Caco-2 (cell line): ENCODE measurements at regions of chr3 and their contacts with region 1.

Region 1: DNA sequence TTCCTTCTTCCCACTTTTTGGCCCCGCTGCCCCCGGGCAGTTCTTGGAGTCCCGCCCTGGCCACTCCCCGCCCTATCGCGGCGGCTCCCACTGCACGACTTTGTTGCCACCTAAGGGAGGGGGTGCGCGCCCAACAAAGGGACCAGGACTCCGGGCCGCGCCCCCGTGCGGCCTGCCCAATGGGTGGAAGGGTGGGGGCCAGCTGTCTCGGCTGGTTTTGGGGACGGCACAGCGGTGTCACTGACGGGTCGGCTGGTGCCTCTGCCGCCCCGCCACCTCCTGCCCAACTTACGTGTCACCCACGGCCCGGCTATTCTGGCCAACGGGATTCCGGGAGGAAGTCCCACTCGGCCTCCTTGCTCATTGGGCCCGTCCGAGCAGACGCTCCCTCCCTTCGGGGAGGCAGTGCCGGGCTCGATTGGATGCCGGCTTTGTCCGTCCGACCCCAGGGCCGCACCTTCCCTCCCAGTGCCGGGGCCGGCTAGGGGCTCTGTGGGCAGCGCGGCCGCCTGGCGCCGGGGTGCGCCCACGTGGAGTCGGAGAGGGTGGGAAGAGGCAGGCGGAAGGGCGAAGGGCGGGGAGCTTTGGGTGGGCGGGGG is at the start of gene GOLIM4:
- DNase-seq: peak; percentile 95 to 96
- H3K4me3 ChIP-seq: peak within 1 kb of the TSS; percentile 86
- H3K4me3 Mint-ChIP-seq: peak within 1 kb of the TSS; percentile 88
- H3K27ac Mint-ChIP-seq: peak within 1 kb of the TSS; percentile 70
- H3K4me1 ChIP-seq: peaks cover 26% of the 10 kb centered on the region
- H3K4me1 Mint-ChIP-seq: peaks cover 12% of the 10 kb centered on the region
- H3K27me3 ChIP-seq: no peaks in the 10 kb centered on the region
- H3K27me3 Mint-ChIP-seq: no peaks in the 10 kb centered on the region
- CTCF ChIP-seq: peak in 1 of 2 experiments; percentile 17
- total RNA-seq, gene GOLIM4: 17.4 and 19.4 TPM in 2 replicates

Region 2: GRCh38 chr3:168061332-168061996 is 34.2 kb before region 1 on chr3:
- CTCF ChIA-PET with region 1: no interaction called
- POLR2A ChIA-PET with region 1: no interaction called
- intact Hi-C with region 1: loop called (anchors 1 kb)
- DNase-seq: peak in 1 of 2 experiments; percentile 8
- H3K4me3 ChIP-seq: no peak overlapping the region
- H3K4me3 Mint-ChIP-seq: no peak overlapping the region
- H3K27ac Mint-ChIP-seq: no peak overlapping the region
- H3K4me1 ChIP-seq: peaks cover 11% of the 10 kb centered on the region
- H3K4me1 Mint-ChIP-seq: peaks cover 5% of the 10 kb centered on the region
- H3K27me3 ChIP-seq: no peaks in the 10 kb centered on the region
- H3K27me3 Mint-ChIP-seq: no peaks in the 10 kb centered on the region
- CTCF ChIP-seq: peak in 1 of 2 experiments; percentile 3

Region 3: DNA sequence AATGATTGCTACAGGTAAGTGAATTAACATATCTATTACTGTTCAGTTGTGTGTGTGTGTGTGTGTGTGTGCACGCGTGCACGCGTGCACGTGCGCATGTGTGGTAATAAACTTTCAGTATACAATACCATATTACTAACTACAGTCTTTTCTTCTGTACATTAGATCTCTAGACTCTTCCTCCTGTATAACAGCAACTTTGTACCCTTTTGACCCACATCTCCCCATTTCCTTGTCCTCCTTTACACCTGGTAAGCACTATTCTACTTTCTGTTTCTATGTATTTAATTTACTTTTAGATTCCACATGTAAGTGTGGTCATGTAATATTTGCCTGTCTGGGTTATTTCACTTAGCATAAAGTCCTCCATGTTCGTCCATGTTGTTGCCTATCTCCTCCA is 29.1 kb after region 1 on chr3:
- CTCF ChIA-PET with region 1: interaction called, 3 read pairs
- POLR2A ChIA-PET with region 1: no interaction called
- intact Hi-C with region 1: loop called (anchors 5 kb)
- DNase-seq: no peak
- H3K4me3 ChIP-seq: no peak overlapping the region
- H3K4me3 Mint-ChIP-seq: no peak overlapping the region
- H3K27ac Mint-ChIP-seq: no peak overlapping the region
- H3K4me1 ChIP-seq: no peaks in the 10 kb centered on the region
- H3K4me1 Mint-ChIP-seq: no peaks in the 10 kb centered on the region
- H3K27me3 ChIP-seq: no peaks in the 10 kb centered on the region
- H3K27me3 Mint-ChIP-seq: peaks cover 3% of the 10 kb centered on the region
- CTCF ChIP-seq: no peak

Region 4: DNA sequence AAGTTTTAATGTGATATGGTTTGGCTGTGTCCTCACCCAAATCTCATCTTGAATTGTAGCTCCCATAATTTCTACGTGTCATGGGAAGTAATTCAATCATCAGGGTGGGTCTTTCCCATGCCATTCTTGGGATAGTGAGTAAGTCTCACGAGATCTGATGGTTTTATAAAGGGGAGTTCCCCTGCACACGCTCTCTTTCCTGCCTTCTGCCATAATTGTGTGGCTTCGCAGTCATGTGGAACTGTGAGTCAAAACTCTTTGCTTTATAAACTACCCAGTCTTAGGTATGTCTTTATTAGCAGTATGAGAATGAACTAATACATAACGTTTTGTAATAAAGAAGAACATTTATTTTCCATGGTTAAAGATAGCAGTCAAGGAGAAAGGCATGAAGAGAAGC is 39.2 kb after region 1 on chr3:
- CTCF ChIA-PET with region 1: no interaction called
- POLR2A ChIA-PET with region 1: no interaction called
- intact Hi-C with region 1: no loop called
- DNase-seq: no peak
- H3K4me3 ChIP-seq: no peak overlapping the region
- H3K4me3 Mint-ChIP-seq: no peak overlapping the region
- H3K27ac Mint-ChIP-seq: no peak overlapping the region
- H3K4me1 ChIP-seq: no peaks in the 10 kb centered on the region
- H3K4me1 Mint-ChIP-seq: no peaks in the 10 kb centered on the region
- H3K27me3 ChIP-seq: no peaks in the 10 kb centered on the region
- H3K27me3 Mint-ChIP-seq: peaks cover 3% of the 10 kb centered on the region
- CTCF ChIP-seq: no peak

Region 5: GRCh38 chr3:168165390-168166269 is 69.9 kb after region 1 on chr3:
- CTCF ChIA-PET with region 1: interaction called, 3 read pairs
- POLR2A ChIA-PET with region 1: no interaction called
- intact Hi-C with region 1: loop called (anchors 2 kb)
- DNase-seq: peak; percentile 53 to 55
- H3K4me3 ChIP-seq: no peak overlapping the region
- H3K4me3 Mint-ChIP-seq: no peak overlapping the region
- H3K27ac Mint-ChIP-seq: no peak overlapping the region
- H3K4me1 ChIP-seq: no peaks in the 10 kb centered on the region
- H3K4me1 Mint-ChIP-seq: no peaks in the 10 kb centered on the region
- H3K27me3 ChIP-seq: no peaks in the 10 kb centered on the region
- H3K27me3 Mint-ChIP-seq: no peaks in the 10 kb centered on the region
- CTCF ChIP-seq: peak; percentile 68 to 73

Region 6: DNA sequence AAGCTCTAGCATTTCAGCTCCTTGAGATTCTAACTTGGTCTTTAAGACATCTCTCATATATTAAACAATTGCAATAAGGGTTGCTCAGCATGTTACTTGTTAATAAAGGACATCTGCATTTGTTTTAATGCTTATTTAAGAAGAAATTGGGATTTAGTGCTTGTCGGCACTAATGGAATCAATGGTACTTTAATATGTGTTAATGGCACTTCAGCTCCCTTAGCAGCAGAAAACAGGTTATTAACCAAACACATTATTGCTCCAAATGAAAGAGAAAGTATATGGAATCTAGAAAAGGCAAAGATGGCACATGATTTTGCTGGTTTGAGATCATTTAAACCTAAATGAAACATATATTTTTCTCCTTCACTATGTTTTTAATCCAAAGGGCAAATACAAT is 137.3 kb after region 1 on chr3:
- CTCF ChIA-PET with region 1: no interaction called
- POLR2A ChIA-PET with region 1: no interaction called
- intact Hi-C with region 1: no loop called
- DNase-seq: no peak
- H3K4me3 ChIP-seq: no peak overlapping the region
- H3K4me3 Mint-ChIP-seq: no peak overlapping the region
- H3K27ac Mint-ChIP-seq: no peak overlapping the region
- H3K4me1 ChIP-seq: no peaks in the 10 kb centered on the region
- H3K4me1 Mint-ChIP-seq: no peaks in the 10 kb centered on the region
- H3K27me3 ChIP-seq: no peaks in the 10 kb centered on the region
- H3K27me3 Mint-ChIP-seq: no peaks in the 10 kb centered on the region
- CTCF ChIP-seq: no peak